ENCODE measurements at regions of chr2 and their contacts with region 1.

Region 1: DNA sequence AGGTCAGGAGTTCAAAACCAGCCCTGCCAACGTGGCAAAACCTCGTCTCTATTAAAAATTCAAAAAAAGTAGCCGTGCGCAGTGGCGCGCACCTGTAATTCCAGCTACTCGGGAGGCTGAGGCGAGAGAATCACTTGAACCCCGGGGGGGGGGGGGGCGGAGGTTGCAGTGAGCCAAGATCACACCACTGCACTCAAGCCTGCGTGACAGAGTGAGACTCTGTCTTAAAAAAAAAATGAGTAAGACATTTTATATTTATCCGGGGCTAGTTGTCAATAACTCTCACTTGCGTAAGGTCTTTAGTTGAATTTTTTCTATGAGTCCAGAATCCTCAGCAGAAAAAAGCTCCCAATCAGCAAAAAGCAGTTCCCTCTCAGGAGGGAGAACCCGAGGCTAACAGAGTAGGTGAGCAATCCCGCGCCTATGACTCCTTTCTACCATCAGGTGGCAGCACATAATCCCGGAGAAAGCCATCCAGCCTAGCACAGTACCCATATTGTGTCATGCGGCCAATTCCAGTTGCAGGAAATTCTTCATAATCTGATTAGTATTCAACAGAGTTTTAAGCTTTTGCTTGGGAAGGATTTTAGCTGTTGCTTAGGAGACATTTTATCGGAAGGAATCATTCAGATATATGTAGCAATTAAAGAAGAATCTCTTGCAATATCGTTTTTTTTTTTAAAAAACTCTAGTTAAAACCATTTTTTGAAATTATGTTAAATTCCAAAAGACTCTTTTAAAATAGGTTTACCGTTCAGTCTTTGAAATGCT is 11.9 kb upstream of the CRYGA start:
- DNase-seq: peak; percentile 85
- H3K4me3 ChIP-seq: peak overlapping the region in 1 of 2 experiments; percentile 20; a peak in 1 of 4 replicates
- H3K27ac ChIP-seq: no peak overlapping the region
- H3K4me1 ChIP-seq: no peaks in the 10 kb centered on the region; a peak in 2 of 4 replicates
- H3K27me3 ChIP-seq: no peaks in the 10 kb centered on the region
- CTCF ChIP-seq: peak; percentile 89
- EP300 ChIP-seq: no peak
- RAD21 ChIP-seq: peak; percentile 84

Region 2: GRCh38 chr2:208101716-208102631 is 73.3 kb before region 1 on chr2:
- CTCF ChIA-PET with region 1: interaction called, 38 read pairs
- POLR2A ChIA-PET with region 1: no interaction called
- DNase-seq: peak; percentile 62
- H3K4me3 ChIP-seq: no peak overlapping the region; a peak in 1 of 4 replicates
- H3K27ac ChIP-seq: no peak overlapping the region
- H3K4me1 ChIP-seq: peaks cover 0 to 2% of the 10 kb centered on the region in 2 experiments; a peak in 1 of 4 replicates
- H3K27me3 ChIP-seq: no peaks in the 10 kb centered on the region
- CTCF ChIP-seq: peak; percentile 71
- EP300 ChIP-seq: no peak
- RAD21 ChIP-seq: peak; percentile 86

Region 3: DNA sequence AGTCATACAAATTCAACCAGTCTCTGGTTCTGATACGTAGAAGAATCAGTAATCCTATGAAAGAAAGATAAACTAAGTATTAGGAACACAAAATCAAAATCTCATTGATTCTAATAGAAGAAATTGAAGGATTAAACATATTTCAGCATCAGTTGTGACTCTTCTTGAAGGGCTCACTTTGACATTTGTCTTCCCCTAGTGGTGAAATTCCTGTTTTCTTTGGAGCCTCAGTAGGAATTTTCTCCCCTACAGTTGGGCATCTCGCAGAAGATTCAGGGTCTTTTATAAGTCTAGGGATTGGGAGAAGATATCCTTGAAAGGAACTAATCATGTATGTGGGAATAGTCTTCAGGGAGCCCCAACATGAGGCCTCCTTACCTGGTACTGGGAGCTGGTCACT is 26.5 kb before region 1 on chr2:
- CTCF ChIA-PET with region 1: interaction called, 22 read pairs
- POLR2A ChIA-PET with region 1: no interaction called
- DNase-seq: no peak
- H3K4me3 ChIP-seq: no peak overlapping the region
- H3K27ac ChIP-seq: no peak overlapping the region
- H3K4me1 ChIP-seq: no peaks in the 10 kb centered on the region
- H3K27me3 ChIP-seq: no peaks in the 10 kb centered on the region
- CTCF ChIP-seq: peak; percentile 32
- EP300 ChIP-seq: no peak
- RAD21 ChIP-seq: no peak; the same call in 1 of the 2 replicates

Region 4: GRCh38 chr2:208164951-208165755 is 10.1 kb before region 1 on chr2:
- CTCF ChIA-PET with region 1: interaction called, 28 read pairs
- POLR2A ChIA-PET with region 1: no interaction called
- DNase-seq: no peak
- H3K4me3 ChIP-seq: no peak overlapping the region
- H3K27ac ChIP-seq: no peak overlapping the region
- H3K4me1 ChIP-seq: no peaks in the 10 kb centered on the region
- H3K27me3 ChIP-seq: no peaks in the 10 kb centered on the region
- CTCF ChIP-seq: no peak
- EP300 ChIP-seq: no peak
- RAD21 ChIP-seq: no peak

Region 5: GRCh38 chr2:208254871-208255556 is 79.8 kb after region 1 on chr2 and contains the start of gene IDH1:
- CTCF ChIA-PET with region 1: interaction called, 81 read pairs
- POLR2A ChIA-PET with region 1: interaction called, 5 read pairs
- DNase-seq: peak; percentile 98
- H3K4me3 ChIP-seq: peak within 1 kb of the TSS; percentile 52 to 95
- H3K27ac ChIP-seq: peak within 1 kb of the TSS; percentile 74 to 87
- H3K4me1 ChIP-seq: peaks cover 0 to 8% of the 10 kb centered on the region in 2 experiments; a peak in 3 of 4 replicates
- H3K27me3 ChIP-seq: no peaks in the 10 kb centered on the region
- CTCF ChIP-seq: peak; percentile 69
- EP300 ChIP-seq: no peak
- RAD21 ChIP-seq: peak; percentile 60
- polyA plus RNA-seq, gene IDH1: 43.4 and 57.2 TPM in 2 replicates

Region 6: DNA sequence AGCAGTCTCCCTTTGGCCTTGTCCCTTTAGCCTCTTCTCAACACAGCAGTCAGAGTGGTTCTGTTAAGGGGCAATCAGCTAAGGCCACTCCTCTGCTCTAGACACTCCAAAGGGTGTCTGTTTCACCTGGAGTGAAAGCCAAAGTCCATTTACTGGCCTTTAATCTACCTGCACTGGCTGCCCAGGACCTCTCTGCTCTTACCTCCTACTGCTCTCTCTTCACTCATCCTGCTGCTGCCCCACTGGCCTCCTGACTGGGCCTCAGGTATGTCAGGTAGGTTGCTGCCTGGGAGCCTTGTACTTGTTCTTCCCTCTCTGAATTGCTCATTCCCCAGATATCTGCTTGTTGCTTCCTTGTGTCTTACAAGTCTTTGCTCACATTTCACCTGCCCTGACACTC is 159.0 kb after region 1 on chr2:
- CTCF ChIA-PET with region 1: no interaction called
- POLR2A ChIA-PET with region 1: no interaction called
- DNase-seq: no peak
- H3K4me3 ChIP-seq: no peak overlapping the region
- H3K27ac ChIP-seq: no peak overlapping the region; a peak in 1 of 4 replicates
- H3K4me1 ChIP-seq: no peaks in the 10 kb centered on the region
- H3K27me3 ChIP-seq: no peaks in the 10 kb centered on the region
- CTCF ChIP-seq: no peak
- EP300 ChIP-seq: no peak
- RAD21 ChIP-seq: no peak